T-cell (primary cell): ENCODE measurements at regions of chr22 and their contacts with region 1.

Region 1: GRCh38 chr22:20456064-20456721 is 18.6 kb upstream of the SCARF2 start:
- DNase-seq: peak; percentile 54 to 87 (median 70)
- ATAC-seq: peak; percentile 94 to 98 (median 96)
- H3K4me3 ChIP-seq: no peak overlapping the region
- H3K4me3 Mint-ChIP-seq: no peak overlapping the region
- H3K27ac ChIP-seq: no peak overlapping the region
- H3K27ac Mint-ChIP-seq: peak overlapping the region; percentile 62 to 67
- H3K4me1 ChIP-seq: peaks cover 3 to 31% of the 10 kb centered on the region in 2 experiments
- H3K4me1 Mint-ChIP-seq: peaks cover 25 to 36% (median 36%) of the 10 kb centered on the region in 3 donors
- H3K27me3 ChIP-seq: no peaks in the 10 kb centered on the region
- H3K27me3 Mint-ChIP-seq: no peaks in the 10 kb centered on the region

Region 2: DNA sequence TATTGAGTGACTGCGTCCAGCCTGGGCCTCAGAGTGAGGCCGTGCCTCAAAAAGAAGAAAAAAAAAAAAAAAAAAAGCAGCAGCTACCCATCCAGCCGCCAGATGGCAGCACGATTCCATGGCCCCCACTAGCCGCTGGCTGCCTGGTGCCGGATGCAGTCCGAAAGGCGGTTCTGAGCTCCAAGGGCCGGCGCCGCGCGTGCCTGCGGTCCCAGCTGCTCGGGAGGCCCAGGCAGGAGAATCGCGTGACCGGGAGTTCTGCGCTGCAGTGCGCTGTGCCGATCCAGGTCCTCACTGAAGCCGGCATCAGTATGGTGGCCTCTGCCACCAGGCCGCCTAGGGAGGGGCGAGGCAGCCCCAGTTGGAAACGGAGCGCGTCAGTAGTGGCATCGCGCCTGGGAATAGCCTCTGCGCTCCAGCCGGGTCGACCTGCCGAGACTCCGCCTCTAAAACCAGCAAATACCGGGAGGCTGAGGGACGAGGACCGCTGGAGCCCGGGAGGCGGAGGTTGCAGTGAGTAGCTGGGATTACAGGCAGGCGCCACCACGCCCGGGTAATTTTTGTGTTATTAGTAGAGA is 37.9 kb before region 1 on chr22:
- CTCF ChIA-PET with region 1: interaction called, 5 to 10 read pairs
- POLR2A ChIA-PET with region 1: no interaction called
- DNase-seq: peak; percentile 22 to 89 (median 63)
- ATAC-seq: peak; percentile 62 to 80 (median 74)
- H3K4me3 ChIP-seq: peak overlapping the region in 1 of 2 donors; percentile 32
- H3K4me3 Mint-ChIP-seq: peak overlapping the region; percentile 28 to 39 (median 38)
- H3K27ac ChIP-seq: no peak overlapping the region
- H3K27ac Mint-ChIP-seq: no peak overlapping the region
- H3K4me1 ChIP-seq: peaks cover 2 to 14% of the 10 kb centered on the region in 2 experiments
- H3K4me1 Mint-ChIP-seq: peaks cover under 1 to 6% (median 4%) of the 10 kb centered on the region in 3 donors
- H3K27me3 ChIP-seq: peaks cover 0 to 12% of the 10 kb centered on the region in 2 experiments
- H3K27me3 Mint-ChIP-seq: peaks cover 0 to 1% of the 10 kb centered on the region in 2 donors

Region 3: DNA sequence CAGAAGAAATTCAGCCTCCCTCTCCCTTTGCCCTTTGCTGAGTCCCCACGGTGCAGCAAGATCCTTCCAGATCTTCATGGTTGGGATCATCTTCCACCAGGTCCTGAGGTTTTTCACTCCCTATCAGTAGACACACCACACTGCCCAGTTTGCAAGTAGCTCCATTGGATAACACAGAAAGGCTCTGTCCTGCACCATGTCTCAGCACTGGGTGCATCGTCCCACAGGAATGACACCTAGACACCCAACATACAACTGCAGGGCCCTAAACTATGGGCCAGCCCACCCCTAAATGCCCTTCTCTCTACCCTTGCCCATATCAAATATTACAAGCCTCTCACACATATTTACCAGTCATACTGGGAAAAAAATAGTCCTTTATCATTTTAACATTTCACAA is 30.0 kb after region 1 on chr22:
- CTCF ChIA-PET with region 1: no interaction called
- POLR2A ChIA-PET with region 1: no interaction called
- DNase-seq: no peak
- ATAC-seq: no peak
- H3K4me3 ChIP-seq: no peak overlapping the region
- H3K4me3 Mint-ChIP-seq: no peak overlapping the region
- H3K27ac ChIP-seq: no peak overlapping the region
- H3K27ac Mint-ChIP-seq: no peak overlapping the region
- H3K4me1 ChIP-seq: peaks cover 9 to 13% of the 10 kb centered on the region in 2 experiments
- H3K4me1 Mint-ChIP-seq: peaks cover 44 to 52% (median 44%) of the 10 kb centered on the region in 3 donors
- H3K27me3 ChIP-seq: no peaks in the 10 kb centered on the region
- H3K27me3 Mint-ChIP-seq: no peaks in the 10 kb centered on the region

Region 4: DNA sequence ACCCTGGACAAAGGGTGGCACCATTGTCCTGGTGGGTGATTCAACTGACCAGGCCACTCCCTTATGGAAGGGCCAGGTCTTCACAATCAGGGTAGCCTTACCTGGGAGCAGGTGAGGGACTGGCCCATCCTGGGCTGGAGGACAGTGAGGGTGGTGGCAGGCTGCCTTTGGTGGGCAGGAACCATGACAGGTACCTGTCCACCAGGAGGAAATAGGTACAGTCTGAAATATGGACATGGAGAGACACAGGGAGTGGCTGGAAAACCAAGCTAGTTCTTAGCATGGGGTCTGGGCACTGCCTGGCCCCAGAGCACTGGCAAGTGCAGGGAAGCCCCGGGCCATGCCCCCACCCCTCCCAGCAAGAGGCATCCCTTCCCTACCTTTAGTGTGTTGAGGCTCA is 165.0 kb after region 1 on chr22:
- CTCF ChIA-PET with region 1: no interaction called
- POLR2A ChIA-PET with region 1: no interaction called
- DNase-seq: no peak
- ATAC-seq: no peak
- H3K4me3 ChIP-seq: no peak overlapping the region
- H3K4me3 Mint-ChIP-seq: no peak overlapping the region
- H3K27ac ChIP-seq: no peak overlapping the region
- H3K27ac Mint-ChIP-seq: no peak overlapping the region
- H3K4me1 ChIP-seq: no peaks in the 10 kb centered on the region
- H3K4me1 Mint-ChIP-seq: no peaks in the 10 kb centered on the region
- H3K27me3 ChIP-seq: no peaks in the 10 kb centered on the region
- H3K27me3 Mint-ChIP-seq: no peaks in the 10 kb centered on the region